Naive thymus-derived CD4-positive, alpha-beta T cell (primary cell): ENCODE measurements at regions of chr2 and their contacts with region 1.

Region 1: DNA sequence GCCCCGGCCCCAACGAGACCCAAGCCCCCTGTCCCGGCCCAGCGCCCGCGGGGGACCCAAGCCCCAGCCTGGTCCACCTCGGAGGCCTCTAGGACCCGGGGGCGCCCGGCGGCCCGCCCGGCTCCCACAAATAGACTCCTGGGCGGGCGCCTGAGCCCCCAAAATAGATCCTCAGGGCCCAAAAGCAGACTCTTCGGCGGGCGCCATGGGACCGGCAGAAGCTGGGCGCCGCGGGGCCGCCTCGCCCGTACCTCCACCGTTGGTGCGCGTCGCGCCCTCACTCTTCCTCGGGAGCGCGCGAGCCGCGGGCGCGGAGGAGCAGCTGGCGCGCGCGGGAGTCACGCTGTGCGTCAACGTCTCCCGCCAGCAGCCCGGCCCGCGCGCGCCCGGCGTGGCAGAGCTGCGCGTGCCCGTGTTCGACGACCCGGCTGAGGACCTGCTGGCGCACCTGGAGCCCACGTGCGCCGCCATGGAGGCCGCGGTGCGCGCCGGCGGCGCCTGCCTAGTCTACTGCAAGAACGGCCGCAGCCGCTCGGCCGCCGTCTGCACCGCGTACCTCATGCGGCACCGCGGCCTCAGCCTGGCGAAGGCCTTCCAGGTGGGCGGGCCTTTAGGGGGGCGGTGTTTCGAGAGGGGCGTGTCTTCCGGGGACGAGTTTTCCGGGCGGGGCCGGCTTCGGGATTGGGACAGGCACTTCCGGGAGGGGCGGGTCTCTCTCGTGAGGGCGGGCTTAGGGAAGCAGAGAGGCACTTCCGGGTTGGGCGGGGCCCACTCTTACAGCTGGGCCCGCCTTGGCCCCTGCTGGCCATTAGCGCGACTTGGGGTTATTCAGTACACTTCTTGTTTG is 546 bp downstream of the DUSP28 start:
- DNase-seq: peak; percentile 98 to 100 (median 99)
- ATAC-seq: peak; percentile 79
- H3K4me3 ChIP-seq: peak overlapping the region; percentile 82
- H3K4me3 Mint-ChIP-seq: peak overlapping the region; percentile 81 to 96 (median 86)
- H3K27ac ChIP-seq: peak overlapping the region; percentile 93
- H3K27ac Mint-ChIP-seq: peak overlapping the region; percentile 85 to 97 (median 90)
- H3K4me1 ChIP-seq: peaks cover 72 to 74% of the 10 kb centered on the region in 2 donors
- H3K4me1 Mint-ChIP-seq: peaks cover 53 to 79% (median 76%) of the 10 kb centered on the region in 7 donors
- H3K27me3 ChIP-seq: no peaks in the 10 kb centered on the region
- H3K27me3 Mint-ChIP-seq: no peaks in the 10 kb centered on the region

Region 2: DNA sequence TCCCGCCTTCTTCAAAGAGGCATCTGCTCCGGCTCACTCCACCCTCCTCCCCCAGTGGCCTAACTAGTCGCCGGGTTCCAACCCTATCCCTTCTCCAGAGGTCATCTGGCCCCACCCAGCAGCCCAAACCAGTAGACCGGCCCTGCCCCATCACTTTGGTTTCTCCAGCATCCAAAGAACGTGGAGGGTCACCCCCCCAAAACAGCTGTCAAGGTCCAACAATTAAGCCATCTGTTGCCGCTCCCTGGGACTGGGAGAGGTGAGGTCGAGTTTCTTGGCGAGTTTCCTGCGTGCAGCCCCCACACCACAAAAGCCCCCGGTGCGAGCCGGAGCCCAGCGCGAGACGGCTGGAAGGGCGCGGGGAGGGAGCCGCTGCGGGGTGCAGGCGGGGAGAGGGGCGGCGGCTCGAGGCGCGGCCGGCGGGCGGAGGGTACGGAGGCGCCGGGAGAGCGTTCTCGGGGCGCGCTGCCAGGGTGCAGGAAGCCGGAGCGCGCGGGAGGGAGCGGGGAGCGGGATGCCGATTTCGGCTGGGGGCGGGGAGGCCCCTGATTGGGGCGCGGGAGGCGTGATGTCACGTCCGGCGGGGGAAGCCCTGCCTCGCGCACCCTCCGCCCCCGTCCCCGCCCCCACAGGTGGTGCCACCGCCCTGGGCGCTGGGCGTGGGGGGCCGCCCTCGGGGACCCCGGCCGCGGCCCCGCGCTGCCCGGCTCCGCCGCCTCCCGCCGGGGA is 125.8 kb before region 1 on chr2:
- CTCF ChIA-PET with region 1: no interaction called
- POLR2A ChIA-PET with region 1: no interaction called
- intact Hi-C with region 1: loop called in 1 of 2 experiments (anchors 1 kb)
- DNase-seq: peak; percentile 70 to 91 (median 81)
- ATAC-seq: peak; percentile 89
- H3K4me3 ChIP-seq: peak overlapping the region; percentile 48
- H3K4me3 Mint-ChIP-seq: peak overlapping the region; percentile 81 to 89 (median 86)
- H3K27ac ChIP-seq: no peak overlapping the region
- H3K27ac Mint-ChIP-seq: peak overlapping the region in 6 of 9 donors; percentile 14 to 77 (median 57)
- H3K4me1 ChIP-seq: peaks cover 0 to 6% of the 10 kb centered on the region in 2 donors
- H3K4me1 Mint-ChIP-seq: peaks cover 0 to 11% (median 4%) of the 10 kb centered on the region in 7 donors
- H3K27me3 ChIP-seq: peaks cover 0 to 12% of the 10 kb centered on the region in 2 donors
- H3K27me3 Mint-ChIP-seq: peaks cover 12 to 33% (median 21%) of the 10 kb centered on the region in 5 donors

Region 3: GRCh38 chr2:240619506-240620148 is 58.9 kb after region 1 on chr2:
- CTCF ChIA-PET with region 1: interaction called, 3 read pairs
- POLR2A ChIA-PET with region 1: interaction called, 30 read pairs
- intact Hi-C with region 1: loop called (anchors 1 kb)
- DNase-seq: peak in 1 of 9 donors; percentile 3
- ATAC-seq: no peak
- H3K4me3 ChIP-seq: no peak overlapping the region
- H3K4me3 Mint-ChIP-seq: peak overlapping the region in 3 of 10 donors; percentile 21 to 48 (median 30)
- H3K27ac ChIP-seq: no peak overlapping the region
- H3K27ac Mint-ChIP-seq: peak overlapping the region in 7 of 9 donors; percentile 32 to 82 (median 66)
- H3K4me1 ChIP-seq: peaks cover 38 to 39% of the 10 kb centered on the region in 2 donors
- H3K4me1 Mint-ChIP-seq: peaks cover 11 to 56% (median 40%) of the 10 kb centered on the region in 7 donors
- H3K27me3 ChIP-seq: no peaks in the 10 kb centered on the region
- H3K27me3 Mint-ChIP-seq: no peaks in the 10 kb centered on the region

Region 4: GRCh38 chr2:241149925-241150659 is 589.4 kb after region 1 on chr2 and contains the start of gene PPP1R7:
- CTCF ChIA-PET with region 1: no interaction called
- POLR2A ChIA-PET with region 1: no interaction called
- intact Hi-C with region 1: loop called (anchors 1 to 2 kb)
- DNase-seq: peak; percentile 83 to 96 (median 93)
- ATAC-seq: peak; percentile 87
- H3K4me3 ChIP-seq: peak within 1 kb of the TSS; percentile 97
- H3K4me3 Mint-ChIP-seq: peak within 1 kb of the TSS; percentile 95 to 100 (median 98)
- H3K27ac ChIP-seq: peak within 1 kb of the TSS; percentile 71
- H3K27ac Mint-ChIP-seq: peak within 1 kb of the TSS; percentile 85 to 97 (median 94)
- H3K4me1 ChIP-seq: peaks cover 13 to 26% of the 10 kb centered on the region in 2 donors
- H3K4me1 Mint-ChIP-seq: peaks cover 33 to 58% (median 51%) of the 10 kb centered on the region in 7 donors
- H3K27me3 ChIP-seq: no peaks in the 10 kb centered on the region
- H3K27me3 Mint-ChIP-seq: no peaks in the 10 kb centered on the region
- total RNA-seq, gene PPP1R7: 39.2 to 105 (median 55.3) TPM

Region 5: DNA sequence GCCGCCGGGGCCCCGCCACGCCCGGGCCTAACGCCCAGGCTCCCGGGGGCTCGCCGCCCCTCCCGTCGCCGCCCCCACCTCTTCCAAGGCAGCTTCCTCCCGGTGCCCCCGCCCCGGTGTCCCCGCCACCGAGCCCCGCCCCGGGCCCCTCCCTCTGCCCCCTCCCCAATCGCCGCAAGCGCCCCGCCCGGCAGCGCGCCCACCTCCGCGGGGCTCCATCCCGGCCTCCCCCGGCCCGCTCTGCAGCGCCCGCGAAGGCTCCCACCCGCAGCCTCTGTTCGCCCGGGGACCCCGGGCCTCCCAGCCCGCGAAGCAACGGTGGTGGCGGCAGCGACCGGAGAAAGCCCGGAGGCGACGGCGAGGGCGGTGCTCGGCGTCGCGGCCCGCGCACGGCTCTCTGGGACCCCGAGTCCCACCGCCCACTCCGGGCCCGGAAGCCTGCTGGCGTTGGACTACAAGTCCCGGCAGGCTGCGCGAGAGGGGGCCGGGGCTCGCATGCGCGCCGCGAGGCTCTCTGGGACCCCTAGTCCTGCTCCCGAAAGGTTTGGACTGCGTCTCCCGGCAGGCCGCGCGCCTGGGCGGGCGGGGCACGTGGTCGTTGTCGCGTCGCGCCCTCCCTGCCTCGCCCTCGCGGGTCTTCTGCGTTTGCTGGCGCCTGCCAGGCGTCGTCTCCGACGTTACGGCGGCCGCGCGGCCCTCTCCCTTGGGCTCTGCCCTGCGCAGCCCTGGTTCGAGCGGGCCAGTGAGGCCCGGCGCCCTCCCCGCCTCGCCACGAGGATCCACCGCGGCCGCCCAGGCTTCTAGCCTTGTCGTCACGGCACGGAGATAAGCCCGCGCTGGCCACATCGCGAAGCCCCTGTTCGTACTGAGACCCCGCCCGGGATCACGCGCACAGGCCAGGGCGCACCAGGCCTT is 947.8 kb after region 1 on chr2 and contains the start of gene STK25:
- CTCF ChIA-PET with region 1: no interaction called
- POLR2A ChIA-PET with region 1: no interaction called
- intact Hi-C with region 1: loop called (anchors 1 to 10 kb)
- DNase-seq: peak; percentile 93 to 98 (median 97)
- ATAC-seq: peak; percentile 96
- H3K4me3 ChIP-seq: peak within 1 kb of the TSS; percentile 70
- H3K4me3 Mint-ChIP-seq: peak within 1 kb of the TSS; percentile 80 to 92 (median 86)
- H3K27ac ChIP-seq: peak within 1 kb of the TSS; percentile 81
- H3K27ac Mint-ChIP-seq: peak within 1 kb of the TSS; percentile 67 to 91 (median 85)
- H3K4me1 ChIP-seq: peaks cover 7 to 16% of the 10 kb centered on the region in 2 donors
- H3K4me1 Mint-ChIP-seq: peaks cover 17 to 33% (median 24%) of the 10 kb centered on the region in 7 donors
- H3K27me3 ChIP-seq: no peaks in the 10 kb centered on the region
- H3K27me3 Mint-ChIP-seq: peaks cover 0 to 1% (median 0%) of the 10 kb centered on the region in 5 donors
- total RNA-seq, gene STK25: 90.8 to 170 (median 115) TPM